ENCODE measurements at regions of chr5 and their contacts with region 1.

Region 1: GRCh38 chr5:160021831-160022446 is 13.0 kb downstream of the TTC1 start:
- DNase-seq: peak; percentile 46
- H3K4me3 Mint-ChIP-seq: no peak overlapping the region
- H3K27ac Mint-ChIP-seq: peak overlapping the region; percentile 60
- H3K4me1 Mint-ChIP-seq: peaks cover 28% of the 10 kb centered on the region
- H3K27me3 Mint-ChIP-seq: no peaks in the 10 kb centered on the region

Region 2: GRCh38 chr5:160008877-160009590 is 12.9 kb before region 1 on chr5 and contains the start of gene TTC1:
- CTCF ChIA-PET with region 1: interaction called, 65 read pairs
- POLR2A ChIA-PET with region 1: interaction called, 3 read pairs
- intact Hi-C with region 1: no loop called
- DNase-seq: peak; percentile 94
- H3K4me3 Mint-ChIP-seq: peak within 1 kb of the TSS; percentile 99
- H3K27ac Mint-ChIP-seq: peak within 1 kb of the TSS; percentile 95
- H3K4me1 Mint-ChIP-seq: peaks cover 22% of the 10 kb centered on the region
- H3K27me3 Mint-ChIP-seq: no peaks in the 10 kb centered on the region
- total RNA-seq, gene TTC1: 53.6 to 54.3 TPM

Region 3: DNA sequence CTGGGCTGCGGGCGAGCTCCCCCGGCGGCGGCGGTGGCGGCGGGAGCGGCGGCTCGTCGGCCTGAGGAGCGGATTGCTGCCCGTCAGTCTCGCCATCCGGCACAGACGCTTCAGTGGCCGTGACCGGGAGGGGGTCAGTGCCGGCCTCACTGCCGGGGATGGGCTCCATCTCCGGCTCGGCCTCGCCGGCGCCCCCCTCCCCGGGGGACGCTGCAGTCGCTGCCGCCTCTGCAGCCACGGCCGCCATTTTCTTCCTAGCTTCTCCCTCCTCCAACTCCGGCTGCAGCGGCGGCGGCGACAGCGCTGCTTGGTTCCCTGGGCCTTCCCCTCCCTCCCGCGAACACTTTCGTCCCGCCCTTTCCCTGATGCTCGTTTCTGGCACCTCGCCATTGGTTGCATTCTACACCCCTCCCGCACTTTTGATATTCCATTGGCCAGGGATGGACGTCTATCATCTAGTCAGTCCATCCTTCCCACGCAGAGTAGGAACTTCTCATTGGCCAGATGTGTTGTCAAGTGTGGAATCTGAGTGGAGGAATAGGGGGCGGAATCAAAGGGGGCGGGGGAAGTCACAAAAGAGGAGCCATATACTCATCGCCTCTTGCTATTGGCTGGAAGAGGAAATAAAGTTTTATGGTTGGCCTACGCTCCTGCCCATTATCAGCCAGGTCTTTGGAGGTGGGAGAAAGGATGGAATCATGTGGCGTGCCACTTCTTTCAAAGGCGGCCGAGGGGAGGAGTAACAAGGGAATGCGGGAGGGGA is 97.4 kb after region 1 on chr5 and contains the start of gene PWWP2A:
- CTCF ChIA-PET with region 1: interaction called, 4 read pairs
- POLR2A ChIA-PET with region 1: no interaction called
- intact Hi-C with region 1: loop called (anchors 2 kb)
- DNase-seq: peak; percentile 98
- H3K4me3 Mint-ChIP-seq: peak within 1 kb of the TSS; percentile 97
- H3K27ac Mint-ChIP-seq: peak within 1 kb of the TSS; percentile 96
- H3K4me1 Mint-ChIP-seq: peaks cover 10% of the 10 kb centered on the region
- H3K27me3 Mint-ChIP-seq: no peaks in the 10 kb centered on the region
- total RNA-seq, gene PWWP2A: 15.7 to 17.4 TPM

Region 4: GRCh38 chr5:160199410-160199911 is 177.5 kb after region 1 on chr5:
- CTCF ChIA-PET with region 1: interaction called, 8 read pairs
- POLR2A ChIA-PET with region 1: no interaction called
- intact Hi-C with region 1: loop called (anchors 1 kb)
- DNase-seq: peak; percentile 77
- H3K4me3 Mint-ChIP-seq: peak overlapping the region; percentile 64
- H3K27ac Mint-ChIP-seq: no peak overlapping the region
- H3K4me1 Mint-ChIP-seq: peaks cover 3% of the 10 kb centered on the region
- H3K27me3 Mint-ChIP-seq: peaks cover 8% of the 10 kb centered on the region

Region 5: GRCh38 chr5:160342403-160342941 is 320.5 kb after region 1 on chr5:
- CTCF ChIA-PET with region 1: interaction called, 48 read pairs
- POLR2A ChIA-PET with region 1: no interaction called
- intact Hi-C with region 1: loop called (anchors 1 kb)
- DNase-seq: no peak
- H3K4me3 Mint-ChIP-seq: no peak overlapping the region
- H3K27ac Mint-ChIP-seq: no peak overlapping the region
- H3K4me1 Mint-ChIP-seq: peaks cover 2% of the 10 kb centered on the region
- H3K27me3 Mint-ChIP-seq: peaks cover 2% of the 10 kb centered on the region

Region 6: DNA sequence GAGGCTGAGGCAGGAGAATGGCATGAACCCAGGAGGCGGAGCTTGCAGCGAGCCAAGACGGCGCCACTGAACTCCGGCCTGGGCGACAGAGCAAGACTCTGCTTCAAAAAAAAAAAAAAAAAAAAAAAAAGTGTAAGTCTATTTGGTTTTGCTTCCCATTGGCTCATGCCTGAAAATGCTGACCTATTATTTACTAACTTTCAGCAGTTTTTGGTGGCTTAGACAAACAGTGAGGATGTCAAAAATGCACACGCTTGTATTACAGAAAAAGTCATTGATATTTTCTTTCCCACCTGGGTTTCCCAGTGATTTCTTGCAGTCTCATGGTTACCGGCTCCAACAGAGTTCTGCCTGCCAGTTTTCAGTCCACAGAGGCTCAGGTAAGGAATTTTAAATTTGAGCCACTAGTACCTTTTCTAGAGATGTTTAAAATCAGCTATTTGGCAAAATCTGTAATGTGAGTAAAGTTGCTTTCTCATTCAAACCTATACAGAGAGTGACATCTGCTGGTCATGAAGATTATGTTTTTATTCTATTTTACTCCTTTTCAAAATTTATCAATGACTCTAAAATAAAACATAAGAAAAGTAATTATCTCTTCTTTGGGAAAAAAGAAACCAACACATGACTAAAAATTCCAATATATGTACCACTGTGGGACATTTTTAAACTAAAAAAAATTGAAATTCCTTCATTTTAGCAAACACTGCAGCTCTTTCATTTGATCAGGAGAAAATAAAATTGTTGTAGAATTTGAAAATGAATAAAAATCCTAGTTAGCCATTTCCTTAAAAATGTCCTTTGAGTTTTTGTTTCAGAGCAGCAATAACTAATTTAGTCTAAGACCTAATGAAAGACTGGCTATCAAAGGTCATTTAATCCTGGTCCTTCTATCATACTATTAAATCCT is 369.1 kb after region 1 on chr5:
- CTCF ChIA-PET with region 1: interaction called, 30 read pairs
- POLR2A ChIA-PET with region 1: no interaction called
- intact Hi-C with region 1: no loop called
- DNase-seq: no peak
- H3K4me3 Mint-ChIP-seq: no peak overlapping the region
- H3K27ac Mint-ChIP-seq: no peak overlapping the region
- H3K4me1 Mint-ChIP-seq: no peaks in the 10 kb centered on the region
- H3K27me3 Mint-ChIP-seq: no peaks in the 10 kb centered on the region

Region 7: DNA sequence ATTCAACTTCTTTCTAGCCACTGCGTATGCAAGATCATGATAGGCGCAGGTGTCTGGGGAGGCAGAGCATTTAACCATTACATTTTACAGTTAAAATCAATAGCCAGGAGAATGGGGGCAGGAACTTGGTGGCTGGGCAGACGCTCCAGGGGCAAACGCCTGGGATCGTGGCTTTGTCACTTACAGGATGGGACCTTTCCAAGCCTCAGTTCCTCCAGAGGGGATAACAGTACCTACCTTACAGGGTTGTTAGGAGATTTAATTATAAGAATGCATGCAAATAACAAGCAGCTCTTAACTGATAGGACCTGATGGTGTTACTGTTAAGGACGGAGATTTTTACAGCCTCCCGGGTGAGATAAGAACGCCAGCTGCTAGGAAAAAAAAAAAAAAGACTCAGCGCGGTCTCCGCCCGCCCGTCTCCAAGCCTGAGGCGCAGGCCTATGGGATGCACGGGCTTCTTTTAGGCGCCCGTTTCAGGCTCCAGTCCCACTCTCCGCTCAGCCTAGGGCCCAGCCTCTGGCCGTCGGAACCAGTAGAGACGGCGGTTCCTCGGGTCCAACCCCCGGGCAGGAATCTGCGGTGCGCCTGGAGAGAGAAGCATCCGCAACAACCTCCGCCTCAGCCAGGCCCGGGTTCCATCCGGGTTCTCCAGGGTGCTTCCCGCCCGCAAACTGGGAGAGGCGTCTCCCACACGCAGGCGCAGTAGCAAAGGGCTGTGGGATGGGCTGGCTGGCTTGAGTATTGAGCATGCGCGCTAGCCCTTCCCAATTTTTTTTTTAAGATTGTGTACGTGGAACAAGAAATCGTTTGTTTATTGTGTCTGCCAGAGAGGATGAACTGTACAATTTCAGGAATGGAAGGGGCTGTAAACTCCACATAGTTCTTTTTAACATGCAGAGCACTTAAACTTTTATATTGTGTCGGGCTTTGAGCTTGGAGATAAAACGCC is 377.7 kb after region 1 on chr5 and contains the start of gene FAM200C:
- CTCF ChIA-PET with region 1: interaction called, 4 read pairs
- POLR2A ChIA-PET with region 1: no interaction called
- intact Hi-C with region 1: loop called (anchors 5 kb)
- DNase-seq: peak; percentile 84
- H3K4me3 Mint-ChIP-seq: peak within 1 kb of the TSS; percentile 82
- H3K27ac Mint-ChIP-seq: peak within 1 kb of the TSS; percentile 73
- H3K4me1 Mint-ChIP-seq: peaks cover 17% of the 10 kb centered on the region
- H3K27me3 Mint-ChIP-seq: no peaks in the 10 kb centered on the region
- total RNA-seq, gene FAM200C: 1.1 to 1.4 TPM

Measured in activated CD4-positive, alpha-beta memory T cell treated with anti-CD3 and anti-CD28 coated beads for 36 hours (primary cell).